Ascending aorta (tissue), 2 donors: ENCODE measurements at regions of chr4 and their contacts with region 1.

Region 1: GRCh38 chr4:30714408-30715027 is 5.7 kb upstream of the PCDH7 start:
- DNase-seq: peak in 1 of 2 donors; percentile 74
- H3K4me3 ChIP-seq: no peak overlapping the region
- H3K27ac ChIP-seq: no peak overlapping the region
- H3K4me1 ChIP-seq: peaks cover 0 to 3% of the 10 kb centered on the region in 2 donors
- H3K27me3 ChIP-seq: no peaks in the 10 kb centered on the region
- CTCF ChIP-seq: peak in 2 of 3 experiments; percentile 70 to 72

Region 2: GRCh38 chr4:30632751-30633150 is 81.8 kb before region 1 on chr4:
- intact Hi-C with region 1: no loop called
- DNase-seq: no peak
- H3K4me3 ChIP-seq: no peak overlapping the region
- H3K27ac ChIP-seq: no peak overlapping the region
- H3K4me1 ChIP-seq: no peaks in the 10 kb centered on the region
- H3K27me3 ChIP-seq: no peaks in the 10 kb centered on the region
- CTCF ChIP-seq: no peak

Region 3: GRCh38 chr4:30783751-30784150 is 69.2 kb after region 1 on chr4:
- intact Hi-C with region 1: no loop called
- DNase-seq: no peak
- H3K4me3 ChIP-seq: no peak overlapping the region
- H3K27ac ChIP-seq: no peak overlapping the region
- H3K4me1 ChIP-seq: peaks cover 0 to 3% of the 10 kb centered on the region in 2 donors
- H3K27me3 ChIP-seq: no peaks in the 10 kb centered on the region
- CTCF ChIP-seq: no peak

Region 4: DNA sequence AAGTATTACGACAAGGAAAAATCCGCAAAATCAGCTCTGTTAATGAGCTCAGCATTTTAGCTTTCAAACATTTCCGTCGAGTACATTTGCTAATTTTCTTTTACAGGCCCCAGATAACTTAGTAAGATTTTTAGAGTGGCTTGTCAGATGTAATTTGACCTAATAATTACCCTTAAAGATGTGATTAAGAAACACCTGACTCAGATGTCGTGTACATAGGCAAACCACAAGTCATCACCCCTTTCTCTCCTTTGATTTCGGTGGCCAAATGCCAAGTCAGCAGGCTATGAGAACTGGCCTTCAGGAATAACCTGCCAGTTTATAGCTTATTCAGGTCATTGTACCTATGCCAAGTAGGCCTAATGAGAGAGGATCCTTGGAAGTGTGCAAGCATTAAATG is 375.3 kb after region 1 on chr4:
- intact Hi-C with region 1: loop called (anchors 2 kb)
- DNase-seq: peak in 1 of 2 donors; percentile 77
- H3K4me3 ChIP-seq: no peak overlapping the region
- H3K27ac ChIP-seq: peak overlapping the region; percentile 81 to 83
- H3K4me1 ChIP-seq: peaks cover 11 to 41% of the 10 kb centered on the region in 2 donors
- H3K27me3 ChIP-seq: no peaks in the 10 kb centered on the region
- CTCF ChIP-seq: no peak

Region 5: GRCh38 chr4:31370866-31371465 is 656.4 kb after region 1 on chr4:
- intact Hi-C with region 1: loop called (anchors 5 kb)
- DNase-seq: no peak
- H3K4me3 ChIP-seq: no peak overlapping the region
- H3K27ac ChIP-seq: no peak overlapping the region
- H3K4me1 ChIP-seq: no peaks in the 10 kb centered on the region
- H3K27me3 ChIP-seq: no peaks in the 10 kb centered on the region
- CTCF ChIP-seq: peak; percentile 25 to 72 (median 67)